ENCODE measurements at regions of chr1 and their contacts with region 1.

Region 1: GRCh38 chr1:212455803-212456528 is 23.2 kb downstream of the NENF start:
- DNase-seq: peak; percentile 92
- H3K4me3 Mint-ChIP-seq: no peak overlapping the region
- H3K27ac Mint-ChIP-seq: no peak overlapping the region
- H3K4me1 Mint-ChIP-seq: no peaks in the 10 kb centered on the region
- H3K27me3 Mint-ChIP-seq: no peaks in the 10 kb centered on the region
- CTCF ChIP-seq: peak; percentile 98

Region 2: DNA sequence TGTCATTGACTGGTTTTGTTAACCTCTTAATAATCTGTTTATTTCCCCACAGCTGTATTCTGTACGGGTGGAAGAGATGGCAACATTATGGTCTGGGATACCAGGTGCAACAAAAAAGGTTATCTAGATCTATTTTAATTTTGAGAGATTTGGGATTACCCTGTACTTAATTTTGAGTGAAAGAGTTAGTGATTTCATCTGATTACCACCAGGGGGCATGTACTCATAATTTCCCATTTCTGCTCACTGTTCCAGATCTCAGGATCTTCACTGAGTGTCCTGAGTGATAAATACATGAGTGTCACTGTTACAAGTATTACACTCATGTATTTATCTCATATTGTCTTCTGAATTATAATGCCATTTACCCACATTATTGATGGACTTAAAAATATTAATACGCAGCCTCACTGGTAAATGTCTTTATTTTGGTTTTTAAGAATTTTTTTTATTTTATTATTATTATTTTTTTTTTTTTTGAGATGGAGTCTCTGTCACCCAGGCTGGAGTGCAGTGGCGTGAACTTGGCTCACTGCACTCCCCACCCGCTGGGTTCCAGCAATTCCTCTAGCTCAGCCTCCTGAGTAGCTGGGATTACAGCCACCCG is 393.0 kb before region 1 on chr1:
- CTCF ChIA-PET with region 1: interaction called, 8 read pairs
- intact Hi-C with region 1: loop called (anchors 2 kb)
- DNase-seq: no peak
- H3K4me3 Mint-ChIP-seq: no peak overlapping the region
- H3K27ac Mint-ChIP-seq: no peak overlapping the region
- H3K4me1 Mint-ChIP-seq: peaks cover 19% of the 10 kb centered on the region
- H3K27me3 Mint-ChIP-seq: no peaks in the 10 kb centered on the region
- CTCF ChIP-seq: peak; percentile 73

Region 3: GRCh38 chr1:212368073-212368484 is 87.9 kb before region 1 on chr1:
- CTCF ChIA-PET with region 1: interaction called, 5 read pairs
- intact Hi-C with region 1: loop called (anchors 2 kb)
- DNase-seq: peak; percentile 66
- H3K4me3 Mint-ChIP-seq: no peak overlapping the region
- H3K27ac Mint-ChIP-seq: no peak overlapping the region
- H3K4me1 Mint-ChIP-seq: no peaks in the 10 kb centered on the region
- H3K27me3 Mint-ChIP-seq: no peaks in the 10 kb centered on the region
- CTCF ChIP-seq: peak; percentile 86

Region 4: GRCh38 chr1:212782422-212783154 is 326.6 kb after region 1 on chr1:
- CTCF ChIA-PET with region 1: interaction called, 3 read pairs
- intact Hi-C with region 1: loop called (anchors 5 kb)
- DNase-seq: no peak
- H3K4me3 Mint-ChIP-seq: no peak overlapping the region
- H3K27ac Mint-ChIP-seq: peak overlapping the region; percentile 9
- H3K4me1 Mint-ChIP-seq: peaks cover 7% of the 10 kb centered on the region
- H3K27me3 Mint-ChIP-seq: no peaks in the 10 kb centered on the region
- CTCF ChIP-seq: peak; percentile 57